Activated T-helper 2 cell treated with anti-CD3 and anti-CD28 coated beads, Interferon-gamma antibody, Interleukin-2, Interleukin-4, amounts not matched to agents 10 μg/mL and 5 μg/mL and 100 μg/mL, durations not matched to agents 14 hours and 24 hours and 36 hours (primary cell): ENCODE measurements at regions of chr20 and their contacts with region 1.

Region 1: GRCh38 chr20:47356526-47357295 is at the start of gene ZMYND8:
- DNase-seq: peak; percentile 97
- H3K4me3 Mint-ChIP-seq: peak within 1 kb of the TSS; percentile 86
- H3K27ac Mint-ChIP-seq: peak within 1 kb of the TSS; percentile 100
- H3K4me1 Mint-ChIP-seq: peaks cover 51% of the 10 kb centered on the region
- H3K27me3 Mint-ChIP-seq: no peaks in the 10 kb centered on the region
- total RNA-seq, gene ZMYND8: 45.7 and 46.7 TPM in 2 replicates

Region 2: DNA sequence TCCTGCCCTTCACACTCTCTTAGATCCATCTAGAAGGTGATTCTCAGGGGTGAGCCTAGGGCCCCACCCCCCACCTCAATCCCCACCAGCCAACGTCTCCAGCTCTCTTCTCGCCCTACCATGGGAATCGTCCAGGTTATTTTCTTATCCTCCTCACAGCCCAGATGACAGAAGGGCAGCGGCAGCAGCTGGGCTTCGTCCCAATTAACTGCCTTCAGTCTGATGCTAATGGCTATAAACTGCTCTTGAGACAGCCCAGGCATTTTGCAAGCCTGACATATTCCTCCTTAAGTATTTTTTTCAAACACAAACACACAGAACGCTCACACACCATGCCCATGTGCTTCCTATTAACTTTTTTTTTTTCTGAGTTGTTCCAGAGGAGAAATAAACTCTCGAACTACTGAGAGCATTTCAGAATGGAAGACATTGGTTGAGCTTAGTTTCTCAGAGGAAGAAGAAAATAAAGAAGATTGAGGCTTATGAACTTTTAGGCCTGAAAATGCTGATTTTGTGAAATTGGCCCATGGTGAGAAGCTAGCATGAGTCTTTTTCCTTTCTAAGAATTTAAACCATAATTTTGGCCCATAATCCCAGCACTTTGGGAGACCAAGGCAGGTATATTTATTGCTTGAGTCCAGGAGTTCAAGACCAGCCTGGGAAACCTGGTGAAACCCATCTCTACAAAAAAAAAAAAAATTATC is 337.4 kb before region 1 on chr20:
- intact Hi-C with region 1: no loop called
- DNase-seq: no peak
- H3K4me3 Mint-ChIP-seq: no peak overlapping the region
- H3K27ac Mint-ChIP-seq: no peak overlapping the region
- H3K4me1 Mint-ChIP-seq: peaks cover 1% of the 10 kb centered on the region
- H3K27me3 Mint-ChIP-seq: peaks cover 21% of the 10 kb centered on the region

Region 3: GRCh38 chr20:47281376-47281775 is 75.3 kb before region 1 on chr20:
- intact Hi-C with region 1: no loop called
- DNase-seq: no peak
- H3K4me3 Mint-ChIP-seq: no peak overlapping the region
- H3K27ac Mint-ChIP-seq: no peak overlapping the region
- H3K4me1 Mint-ChIP-seq: peaks cover 6% of the 10 kb centered on the region
- H3K27me3 Mint-ChIP-seq: no peaks in the 10 kb centered on the region

Region 4: DNA sequence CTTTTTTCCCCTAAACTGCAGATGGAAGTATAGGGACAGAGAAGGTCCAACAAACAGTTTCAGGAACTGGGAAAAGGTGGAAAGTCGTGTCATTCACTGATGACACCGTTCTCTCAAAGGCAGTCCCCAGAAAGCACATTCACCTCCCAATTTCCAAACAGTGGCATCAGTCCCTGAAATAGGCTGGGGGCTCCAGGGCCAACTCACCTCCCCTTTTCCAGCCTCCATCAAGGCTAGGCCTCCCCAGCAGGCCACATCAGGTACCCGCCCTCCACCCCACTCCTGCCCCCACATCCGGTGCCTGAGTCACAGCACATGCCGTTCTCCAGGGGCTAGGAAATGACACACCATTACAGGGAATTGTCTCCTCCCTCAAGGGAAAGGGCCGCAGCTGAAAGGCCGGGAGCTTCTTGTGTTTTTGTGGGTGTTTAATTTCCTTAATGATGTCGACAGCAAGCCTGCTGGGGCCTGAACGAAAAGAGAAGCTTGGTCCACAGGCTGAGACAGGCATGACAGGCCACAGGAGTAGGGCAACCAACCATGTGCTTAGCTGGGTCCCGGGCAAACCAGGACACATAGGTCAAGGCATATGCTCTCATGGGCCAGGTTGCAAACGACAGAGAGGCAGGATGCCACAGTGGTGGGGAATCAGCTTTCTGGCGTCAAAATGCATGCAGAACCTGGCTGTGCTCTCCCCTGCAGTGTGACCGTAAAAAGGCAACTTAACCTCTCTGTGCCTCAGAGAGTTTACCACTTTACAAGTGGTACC is 39.4 kb before region 1 on chr20:
- intact Hi-C with region 1: loop called (anchors 2 kb)
- DNase-seq: peak; percentile 38
- H3K4me3 Mint-ChIP-seq: no peak overlapping the region
- H3K27ac Mint-ChIP-seq: peak overlapping the region; percentile 87
- H3K4me1 Mint-ChIP-seq: peaks cover 51% of the 10 kb centered on the region
- H3K27me3 Mint-ChIP-seq: no peaks in the 10 kb centered on the region

Region 5: GRCh38 chr20:47330933-47331864 is 25.5 kb before region 1 on chr20:
- intact Hi-C with region 1: loop called (anchors 2 kb)
- DNase-seq: no peak
- H3K4me3 Mint-ChIP-seq: no peak overlapping the region
- H3K27ac Mint-ChIP-seq: peak overlapping the region; percentile 79
- H3K4me1 Mint-ChIP-seq: peaks cover 33% of the 10 kb centered on the region
- H3K27me3 Mint-ChIP-seq: no peaks in the 10 kb centered on the region

Region 6: GRCh38 chr20:47379433-47380150 is 22.9 kb after region 1 on chr20:
- intact Hi-C with region 1: loop called (anchors 2 kb)
- DNase-seq: no peak
- H3K4me3 Mint-ChIP-seq: no peak overlapping the region
- H3K27ac Mint-ChIP-seq: peak overlapping the region; percentile 44
- H3K4me1 Mint-ChIP-seq: peaks cover 15% of the 10 kb centered on the region
- H3K27me3 Mint-ChIP-seq: no peaks in the 10 kb centered on the region

Region 7: GRCh38 chr20:47487175-47487917 is 130.6 kb after region 1 on chr20:
- intact Hi-C with region 1: loop called (anchors 5 kb)
- DNase-seq: peak; percentile 69
- H3K4me3 Mint-ChIP-seq: peak overlapping the region; percentile 60
- H3K27ac Mint-ChIP-seq: peak overlapping the region; percentile 99
- H3K4me1 Mint-ChIP-seq: peaks cover 53% of the 10 kb centered on the region
- H3K27me3 Mint-ChIP-seq: no peaks in the 10 kb centered on the region

Region 8: DNA sequence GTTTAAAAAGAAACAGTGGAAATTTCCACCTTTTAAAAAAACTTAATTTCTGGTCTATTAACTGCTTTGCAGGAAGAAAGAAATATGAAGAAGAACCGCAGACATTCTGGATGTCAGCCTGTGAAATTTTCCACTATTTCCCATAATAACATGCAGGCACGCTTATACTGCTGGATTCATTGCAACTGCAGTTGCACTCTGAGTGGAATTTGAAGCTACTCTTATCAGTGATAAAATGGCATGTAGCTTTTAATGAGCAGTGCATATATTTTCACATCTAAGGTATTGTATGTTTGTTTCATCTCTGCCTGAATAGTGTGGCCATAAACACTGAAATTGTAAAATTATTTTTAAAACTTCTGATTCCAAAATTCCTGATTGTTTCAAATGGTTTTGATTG is 173.1 kb after region 1 on chr20:
- intact Hi-C with region 1: no loop called
- DNase-seq: no peak
- H3K4me3 Mint-ChIP-seq: no peak overlapping the region
- H3K27ac Mint-ChIP-seq: peak overlapping the region; percentile 22
- H3K4me1 Mint-ChIP-seq: peaks cover 35% of the 10 kb centered on the region
- H3K27me3 Mint-ChIP-seq: no peaks in the 10 kb centered on the region

Region 9: DNA sequence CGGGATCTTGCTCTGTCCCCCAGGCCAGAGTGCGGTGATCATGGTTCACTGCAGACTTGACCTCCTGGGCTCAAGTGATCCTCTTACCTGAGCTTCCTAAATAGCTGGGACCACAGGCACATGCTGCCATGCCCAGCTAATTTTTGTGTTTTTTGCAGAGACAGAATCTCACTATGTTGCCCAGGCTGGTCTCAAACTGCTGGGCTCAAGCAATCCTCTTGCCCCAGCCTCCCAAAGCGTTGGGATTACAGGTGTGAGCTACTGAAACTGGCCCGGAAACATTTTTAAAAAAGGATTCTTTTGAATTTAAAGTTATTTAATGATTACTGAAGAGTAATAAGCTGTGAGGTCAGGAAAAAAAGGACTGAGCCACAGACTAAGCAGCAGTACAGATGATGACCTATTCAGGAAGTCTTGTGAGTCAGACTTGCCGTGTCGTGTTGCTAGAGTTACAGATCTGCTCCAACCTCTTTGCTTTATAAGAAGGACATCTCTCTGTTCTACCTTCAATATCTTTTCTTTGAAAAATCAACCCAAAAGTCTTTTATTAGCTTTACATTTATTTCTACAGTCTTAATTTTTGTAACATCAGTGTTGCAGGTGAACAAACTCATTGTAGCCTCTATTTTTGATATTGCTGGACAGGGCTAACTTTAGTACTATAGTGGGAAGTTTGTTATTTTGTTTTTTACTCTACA is 253.7 kb after region 1 on chr20:
- intact Hi-C with region 1: loop called (anchors 10 kb)
- DNase-seq: peak; percentile 64
- H3K4me3 Mint-ChIP-seq: peak overlapping the region; percentile 76
- H3K27ac Mint-ChIP-seq: peak overlapping the region; percentile 99
- H3K4me1 Mint-ChIP-seq: peaks cover 77% of the 10 kb centered on the region
- H3K27me3 Mint-ChIP-seq: no peaks in the 10 kb centered on the region